IMR-90 (cell line): ENCODE measurements at regions of chr10 and their contacts with region 1.

Region 1: GRCh38 chr10:95445837-95446486 is 115.2 kb downstream of the SORBS1 start:
- DNase-seq: peak; percentile 69
- ATAC-seq: peak; percentile 81
- H3K4me3 ChIP-seq: no peak overlapping the region
- H3K27ac ChIP-seq: no peak overlapping the region
- H3K4me1 ChIP-seq: peaks cover 3% of the 10 kb centered on the region
- H3K27me3 ChIP-seq: peaks cover 8% of the 10 kb centered on the region
- CTCF ChIP-seq: peak; percentile 64
- POLR2A ChIP-seq: no peak
- RAD21 ChIP-seq: peak; percentile 39; the same call in 1 of the 2 replicates

Region 2: GRCh38 chr10:95339863-95340262 is 106.1 kb before region 1 on chr10:
- CTCF ChIA-PET with region 1: interaction called, 10 read pairs
- POLR2A ChIA-PET with region 1: no interaction called
- dilution Hi-C with region 1: no loop called
- in situ Hi-C with region 1: no loop called
- intact Hi-C with region 1: no loop called
- DNase-seq: no peak
- ATAC-seq: no peak
- H3K4me3 ChIP-seq: no peak overlapping the region
- H3K27ac ChIP-seq: no peak overlapping the region
- H3K4me1 ChIP-seq: peaks cover 15% of the 10 kb centered on the region
- H3K27me3 ChIP-seq: no peaks in the 10 kb centered on the region
- CTCF ChIP-seq: no peak
- POLR2A ChIP-seq: no peak
- RAD21 ChIP-seq: no peak

Region 3: DNA sequence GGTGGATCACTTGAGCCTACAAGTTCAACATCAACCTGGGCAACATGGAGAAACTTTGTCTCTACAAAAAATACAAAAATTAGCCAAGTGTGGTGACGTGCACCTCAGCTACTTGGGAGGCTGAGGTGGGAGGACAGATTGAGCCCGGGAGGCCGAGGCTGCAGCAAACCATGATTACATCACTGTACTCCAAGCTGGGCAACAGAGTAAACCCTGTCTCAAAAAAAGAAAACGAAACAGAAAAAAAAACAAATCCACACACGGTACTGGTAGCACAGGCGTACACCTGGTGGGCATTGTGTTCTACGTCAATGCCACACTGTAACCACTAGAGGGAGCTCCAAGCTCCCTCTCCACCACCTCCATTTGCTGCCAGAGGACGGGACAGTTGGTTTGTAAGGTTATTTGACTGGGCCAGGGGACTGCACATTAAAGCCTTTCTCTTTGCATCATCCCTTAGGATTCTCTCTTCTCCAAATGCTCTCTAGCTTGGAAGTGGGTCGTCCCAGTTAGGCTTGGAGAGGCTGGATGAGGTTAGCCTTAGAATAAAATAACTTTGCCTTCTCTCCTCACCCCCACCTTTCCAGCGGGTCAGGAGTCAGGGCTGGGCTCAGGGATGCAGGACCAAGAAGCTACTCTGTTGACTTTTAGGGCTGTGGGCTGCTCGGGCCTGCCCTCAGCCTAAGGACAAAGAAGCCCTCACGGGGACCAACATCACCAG is 15.6 kb before region 1 on chr10:
- CTCF ChIA-PET with region 1: interaction called, 8 read pairs
- POLR2A ChIA-PET with region 1: no interaction called
- dilution Hi-C with region 1: no loop called
- in situ Hi-C with region 1: no loop called
- intact Hi-C with region 1: loop called (anchors 1 kb)
- DNase-seq: peak; percentile 44
- ATAC-seq: peak; percentile 91
- H3K4me3 ChIP-seq: no peak overlapping the region
- H3K27ac ChIP-seq: no peak overlapping the region
- H3K4me1 ChIP-seq: no peaks in the 10 kb centered on the region
- H3K27me3 ChIP-seq: peaks cover 15% of the 10 kb centered on the region
- CTCF ChIP-seq: peak; percentile 90
- POLR2A ChIP-seq: no peak
- RAD21 ChIP-seq: peak; percentile 87